ENCODE measurements at regions of chr6 and their contacts with region 1.

Region 1: DNA sequence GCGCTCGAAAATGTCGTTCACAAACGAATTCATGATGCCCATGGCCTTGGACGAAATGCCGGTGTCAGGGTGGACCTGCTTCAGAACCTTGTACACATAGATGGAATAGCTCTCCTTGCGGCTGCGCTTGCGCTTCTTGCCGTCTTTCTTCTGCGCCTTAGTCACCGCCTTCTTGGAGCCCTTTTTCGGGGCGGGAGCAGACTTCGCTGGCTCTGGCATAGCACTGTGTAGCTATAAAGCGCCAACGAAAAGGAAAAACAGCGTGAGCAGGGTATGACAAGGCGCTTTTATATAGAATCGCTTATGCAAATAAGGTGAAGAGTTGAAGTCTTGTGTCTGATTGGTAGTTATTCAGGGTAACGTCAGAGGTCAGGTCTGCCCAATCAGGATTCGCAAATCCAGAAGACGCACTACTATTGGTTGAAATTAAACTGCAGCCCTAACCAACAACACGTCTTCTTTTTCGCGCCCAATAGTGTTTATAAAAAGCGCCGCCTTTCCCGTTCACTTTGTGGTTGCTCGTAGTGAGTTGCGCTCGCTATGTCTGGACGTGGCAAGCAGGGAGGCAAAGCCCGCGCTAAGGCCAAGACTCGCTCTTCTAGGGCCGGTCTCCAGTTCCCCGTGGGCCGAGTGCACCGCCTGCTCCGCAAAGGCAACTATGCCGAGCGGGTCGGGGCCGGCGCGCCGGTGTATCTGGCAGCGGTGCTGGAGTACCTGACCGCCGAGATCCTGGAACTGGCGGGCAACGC is 114.8 kb upstream of the PRSS16 start:
- DNase-seq: peak; percentile 95 to 96
- H3K4me3 ChIP-seq: peak overlapping the region; percentile 70
- H3K4me3 Mint-ChIP-seq: no peak overlapping the region
- H3K27ac Mint-ChIP-seq: no peak overlapping the region
- H3K4me1 ChIP-seq: peaks cover 25% of the 10 kb centered on the region
- H3K4me1 Mint-ChIP-seq: peaks cover 6% of the 10 kb centered on the region
- H3K27me3 ChIP-seq: no peaks in the 10 kb centered on the region
- H3K27me3 Mint-ChIP-seq: no peaks in the 10 kb centered on the region
- CTCF ChIP-seq: no peak

Region 2: GRCh38 chr6:26025894-26026832 is 1106.5 kb before region 1 on chr6:
- CTCF ChIA-PET with region 1: no interaction called
- POLR2A ChIA-PET with region 1: no interaction called
- intact Hi-C with region 1: loop called (anchors 5 kb)
- DNase-seq: peak; percentile 94 to 95
- H3K4me3 ChIP-seq: peak overlapping the region; percentile 74
- H3K4me3 Mint-ChIP-seq: peak overlapping the region; percentile 85
- H3K27ac Mint-ChIP-seq: peak overlapping the region; percentile 100
- H3K4me1 ChIP-seq: peaks cover 18% of the 10 kb centered on the region; the same call in 1 of the 2 replicates
- H3K4me1 Mint-ChIP-seq: peaks cover 35% of the 10 kb centered on the region
- H3K27me3 ChIP-seq: no peaks in the 10 kb centered on the region
- H3K27me3 Mint-ChIP-seq: peaks cover 4% of the 10 kb centered on the region
- CTCF ChIP-seq: peak; percentile 81 to 87

Region 3: GRCh38 chr6:26204332-26205165 is 928.2 kb before region 1 on chr6:
- CTCF ChIA-PET with region 1: no interaction called
- POLR2A ChIA-PET with region 1: interaction called, 3 read pairs
- intact Hi-C with region 1: loop called (anchors 10 kb)
- DNase-seq: peak; percentile 94 to 98
- H3K4me3 ChIP-seq: peak overlapping the region; percentile 90
- H3K4me3 Mint-ChIP-seq: no peak overlapping the region
- H3K27ac Mint-ChIP-seq: no peak overlapping the region
- H3K4me1 ChIP-seq: peaks cover 9% of the 10 kb centered on the region
- H3K4me1 Mint-ChIP-seq: peaks cover 4% of the 10 kb centered on the region
- H3K27me3 ChIP-seq: no peaks in the 10 kb centered on the region
- H3K27me3 Mint-ChIP-seq: peaks cover under 1% of the 10 kb centered on the region
- CTCF ChIP-seq: peak in 1 of 2 experiments; percentile 41

Region 4: DNA sequence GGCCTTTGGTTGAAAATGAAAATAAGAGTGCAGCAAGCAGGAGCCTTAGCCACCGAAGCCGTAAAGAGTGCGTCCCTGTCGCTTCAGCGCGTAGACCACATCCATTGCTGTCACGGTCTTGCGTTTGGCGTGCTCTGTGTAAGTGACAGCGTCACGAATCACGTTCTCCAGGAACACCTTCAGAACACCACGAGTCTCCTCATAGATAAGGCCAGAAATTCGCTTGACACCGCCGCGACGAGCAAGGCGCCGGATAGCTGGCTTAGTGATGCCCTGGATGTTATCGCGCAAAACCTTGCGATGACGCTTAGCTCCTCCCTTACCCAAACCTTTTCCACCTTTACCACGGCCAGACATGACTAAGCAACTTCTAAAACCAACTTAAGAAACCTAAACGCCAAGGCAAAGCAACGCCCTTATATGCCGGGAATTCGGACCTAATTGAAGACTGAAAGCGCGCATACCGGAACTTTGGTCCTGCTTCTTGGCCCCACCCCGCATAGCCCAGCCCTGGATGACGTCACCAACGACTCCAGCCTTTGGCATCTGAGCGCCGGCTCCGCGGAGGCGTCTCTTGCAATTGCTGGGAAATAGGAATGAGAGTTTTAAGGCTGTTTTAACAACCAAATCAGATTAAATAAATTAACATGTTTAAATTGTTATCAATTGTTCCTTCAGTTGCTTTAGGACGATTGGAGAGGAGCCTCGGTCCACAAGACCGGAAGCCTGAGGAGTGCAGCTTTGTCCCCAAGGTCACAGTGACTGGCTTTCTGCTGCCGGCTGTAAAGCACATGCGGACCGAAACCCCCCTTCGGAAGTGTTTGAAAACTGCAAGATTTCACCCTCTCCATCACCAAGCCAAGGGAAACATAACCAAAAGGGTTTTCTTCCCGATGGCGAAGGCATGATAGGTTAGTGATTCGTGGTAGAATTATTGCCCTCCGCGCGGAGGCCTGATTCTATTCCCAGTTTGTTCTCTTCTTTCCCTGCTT is 847.3 kb before region 1 on chr6:
- CTCF ChIA-PET with region 1: no interaction called
- POLR2A ChIA-PET with region 1: interaction called, 5 read pairs
- intact Hi-C with region 1: loop called (anchors 5 kb)
- DNase-seq: peak; percentile 97 to 99
- H3K4me3 ChIP-seq: peak overlapping the region; percentile 55
- H3K4me3 Mint-ChIP-seq: peak overlapping the region; percentile 82
- H3K27ac Mint-ChIP-seq: peak overlapping the region; percentile 100
- H3K4me1 ChIP-seq: no peaks in the 10 kb centered on the region
- H3K4me1 Mint-ChIP-seq: peaks cover 17% of the 10 kb centered on the region
- H3K27me3 ChIP-seq: no peaks in the 10 kb centered on the region
- H3K27me3 Mint-ChIP-seq: peaks cover 6% of the 10 kb centered on the region
- CTCF ChIP-seq: no peak

Region 5: GRCh38 chr6:27114792-27115191 is 17.9 kb before region 1 on chr6:
- CTCF ChIA-PET with region 1: no interaction called
- POLR2A ChIA-PET with region 1: no interaction called
- intact Hi-C with region 1: no loop called
- DNase-seq: no peak
- H3K4me3 ChIP-seq: no peak overlapping the region
- H3K4me3 Mint-ChIP-seq: no peak overlapping the region
- H3K27ac Mint-ChIP-seq: no peak overlapping the region
- H3K4me1 ChIP-seq: no peaks in the 10 kb centered on the region
- H3K4me1 Mint-ChIP-seq: no peaks in the 10 kb centered on the region
- H3K27me3 ChIP-seq: no peaks in the 10 kb centered on the region
- H3K27me3 Mint-ChIP-seq: no peaks in the 10 kb centered on the region
- CTCF ChIP-seq: no peak

Region 6: DNA sequence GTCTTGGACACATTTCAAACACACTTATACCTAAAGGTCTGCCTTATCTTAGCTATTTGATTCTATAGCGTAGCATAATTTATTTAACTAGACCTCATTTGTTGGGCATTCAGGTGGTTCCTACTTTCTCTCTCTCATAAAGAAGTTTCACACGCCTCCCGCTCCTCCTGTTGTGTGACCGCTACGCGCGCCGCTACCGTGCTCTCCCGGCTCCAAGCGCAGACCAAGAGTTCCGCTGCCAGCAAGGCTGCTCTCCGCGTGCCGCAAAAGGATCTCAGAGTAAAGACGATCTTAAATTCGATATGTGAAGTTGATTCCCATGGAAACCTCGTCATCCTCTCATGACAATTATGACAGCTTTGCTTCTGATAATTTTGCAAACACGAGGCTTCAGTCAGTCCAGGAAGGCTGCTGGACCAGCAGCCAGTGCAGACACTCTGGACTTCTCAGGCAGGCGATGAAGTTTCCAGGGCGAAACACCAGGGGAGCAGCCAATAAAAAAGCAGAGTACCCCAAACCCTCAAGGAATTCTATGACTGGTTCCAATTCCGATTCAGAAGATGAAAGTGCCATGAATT is 135.2 kb after region 1 on chr6:
- CTCF ChIA-PET with region 1: no interaction called
- POLR2A ChIA-PET with region 1: no interaction called
- intact Hi-C with region 1: no loop called
- DNase-seq: no peak
- H3K4me3 ChIP-seq: no peak overlapping the region
- H3K4me3 Mint-ChIP-seq: no peak overlapping the region
- H3K27ac Mint-ChIP-seq: no peak overlapping the region
- H3K4me1 ChIP-seq: no peaks in the 10 kb centered on the region
- H3K4me1 Mint-ChIP-seq: no peaks in the 10 kb centered on the region
- H3K27me3 ChIP-seq: no peaks in the 10 kb centered on the region
- H3K27me3 Mint-ChIP-seq: no peaks in the 10 kb centered on the region
- CTCF ChIP-seq: no peak

Region 7: GRCh38 chr6:27290065-27290849 is 157.6 kb after region 1 on chr6:
- CTCF ChIA-PET with region 1: no interaction called
- POLR2A ChIA-PET with region 1: no interaction called
- intact Hi-C with region 1: no loop called
- DNase-seq: no peak
- H3K4me3 ChIP-seq: no peak overlapping the region
- H3K4me3 Mint-ChIP-seq: peak overlapping the region; percentile 10
- H3K27ac Mint-ChIP-seq: no peak overlapping the region
- H3K4me1 ChIP-seq: peaks cover 9% of the 10 kb centered on the region; the same call in 1 of the 2 replicates
- H3K4me1 Mint-ChIP-seq: peaks cover 7% of the 10 kb centered on the region
- H3K27me3 ChIP-seq: no peaks in the 10 kb centered on the region
- H3K27me3 Mint-ChIP-seq: peaks cover 6% of the 10 kb centered on the region
- CTCF ChIP-seq: no peak

Region 8: GRCh38 chr6:27838058-27838944 is 705.6 kb after region 1 on chr6:
- CTCF ChIA-PET with region 1: no interaction called
- POLR2A ChIA-PET with region 1: interaction called, 16 read pairs
- intact Hi-C with region 1: no loop called
- DNase-seq: peak; percentile 91 to 92
- H3K4me3 ChIP-seq: peak overlapping the region; percentile 77
- H3K4me3 Mint-ChIP-seq: no peak overlapping the region
- H3K27ac Mint-ChIP-seq: no peak overlapping the region
- H3K4me1 ChIP-seq: peaks cover 14% of the 10 kb centered on the region; the same call in 1 of the 2 replicates
- H3K4me1 Mint-ChIP-seq: peaks cover 21% of the 10 kb centered on the region
- H3K27me3 ChIP-seq: no peaks in the 10 kb centered on the region
- H3K27me3 Mint-ChIP-seq: no peaks in the 10 kb centered on the region
- CTCF ChIP-seq: no peak

Region 9: GRCh38 chr6:28863604-28864320 is 1731.1 kb after region 1 on chr6:
- CTCF ChIA-PET with region 1: no interaction called
- POLR2A ChIA-PET with region 1: no interaction called
- intact Hi-C with region 1: loop called (anchors 10 kb)
- DNase-seq: peak; percentile 85 to 87
- H3K4me3 ChIP-seq: peak overlapping the region; percentile 81
- H3K4me3 Mint-ChIP-seq: peak overlapping the region; percentile 79
- H3K27ac Mint-ChIP-seq: peak overlapping the region; percentile 96
- H3K4me1 ChIP-seq: peaks cover 11% of the 10 kb centered on the region
- H3K4me1 Mint-ChIP-seq: peaks cover 20% of the 10 kb centered on the region
- H3K27me3 ChIP-seq: no peaks in the 10 kb centered on the region
- H3K27me3 Mint-ChIP-seq: no peaks in the 10 kb centered on the region
- CTCF ChIP-seq: no peak

Measured in Caco-2 (cell line).